Activated CD8-positive, alpha-beta T cell treated with anti-CD3 and anti-CD28 coated beads for 36 hours (primary cell): ENCODE measurements at regions of chr12 and their contacts with region 1.

Region 1: DNA sequence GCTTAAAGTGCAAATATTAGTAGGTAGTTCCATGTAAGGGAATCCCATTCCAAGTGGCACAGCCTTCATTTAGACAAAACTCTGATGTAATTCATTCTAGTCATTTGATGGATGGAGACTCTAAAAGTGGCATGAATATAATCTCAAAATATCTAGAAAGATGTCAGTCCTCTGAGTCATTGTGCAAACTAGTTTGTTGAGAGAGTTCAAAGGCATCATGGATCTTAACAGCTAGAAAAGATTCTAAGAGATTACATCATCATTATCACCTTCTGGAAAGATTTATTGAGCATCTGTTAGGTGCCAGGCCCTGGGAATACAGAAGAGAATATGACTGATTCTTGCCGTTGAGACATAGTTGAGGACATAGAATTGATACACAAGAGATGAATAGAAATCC is 30.7 kb downstream of the CRADD start:
- DNase-seq: no peak
- ATAC-seq: no peak
- H3K4me3 Mint-ChIP-seq: no peak overlapping the region
- H3K27ac Mint-ChIP-seq: no peak overlapping the region
- H3K4me1 Mint-ChIP-seq: peaks cover 19% of the 10 kb centered on the region
- H3K27me3 Mint-ChIP-seq: no peaks in the 10 kb centered on the region
- CTCF ChIP-seq: no peak

Region 2: DNA sequence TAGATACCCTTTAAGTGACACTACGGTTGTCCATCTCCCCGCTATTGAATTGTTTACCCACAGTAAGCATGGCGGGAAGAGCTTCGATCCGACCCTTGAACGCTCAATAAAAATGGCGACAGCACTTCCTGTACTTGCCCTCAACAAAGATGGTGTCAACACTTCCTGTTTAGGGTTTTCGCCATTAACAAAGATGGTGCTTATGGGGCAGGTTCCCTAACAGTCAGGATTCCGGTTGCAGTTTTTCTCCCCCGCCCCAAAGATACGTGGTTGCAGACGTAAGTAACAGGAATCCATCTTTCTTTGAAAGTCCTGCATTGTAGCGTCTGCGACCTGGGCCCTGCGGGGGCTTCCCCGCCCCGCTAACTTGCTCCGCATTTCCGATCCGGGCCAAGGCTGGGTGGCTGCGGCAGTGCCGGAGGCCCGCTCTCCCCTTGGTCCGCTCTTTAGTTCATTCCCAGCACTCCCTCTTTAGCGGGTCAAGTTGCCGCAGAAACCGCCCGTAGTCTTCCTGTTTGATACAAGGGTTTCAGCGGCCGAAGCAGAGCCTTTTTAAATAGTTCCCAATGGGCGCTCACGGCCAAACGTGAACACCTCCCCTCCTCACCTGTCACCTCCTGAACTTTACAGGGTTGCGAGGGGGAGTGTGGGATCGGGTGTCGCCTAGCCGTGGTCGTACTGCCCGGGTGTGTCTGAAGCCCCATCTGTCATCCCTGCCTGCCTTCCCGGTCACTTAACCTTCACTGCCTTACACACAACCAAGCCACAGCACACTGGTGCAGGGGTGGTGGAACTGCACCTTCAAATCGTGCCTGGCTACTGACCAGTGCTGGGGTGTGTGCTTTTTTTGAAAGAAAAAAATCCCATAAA is 30.4 kb before region 1 on chr12 and contains the start of gene CRADD:
- CTCF ChIA-PET with region 1: no interaction called
- POLR2A ChIA-PET with region 1: interaction called, 3 read pairs
- intact Hi-C with region 1: loop called (anchors 1 kb)
- DNase-seq: peak; percentile 92
- ATAC-seq: peak; percentile 96
- H3K4me3 Mint-ChIP-seq: peak within 1 kb of the TSS; percentile 98
- H3K27ac Mint-ChIP-seq: peak within 1 kb of the TSS; percentile 100
- H3K4me1 Mint-ChIP-seq: peaks cover 31% of the 10 kb centered on the region
- H3K27me3 Mint-ChIP-seq: peaks cover 10% of the 10 kb centered on the region
- CTCF ChIP-seq: no peak
- total RNA-seq, gene CRADD: 7.0 to 11.3 TPM